Right lobe of liver (tissue), 6 donors: ENCODE measurements at regions of chr19 and their contacts with region 1.

Region 1: DNA sequence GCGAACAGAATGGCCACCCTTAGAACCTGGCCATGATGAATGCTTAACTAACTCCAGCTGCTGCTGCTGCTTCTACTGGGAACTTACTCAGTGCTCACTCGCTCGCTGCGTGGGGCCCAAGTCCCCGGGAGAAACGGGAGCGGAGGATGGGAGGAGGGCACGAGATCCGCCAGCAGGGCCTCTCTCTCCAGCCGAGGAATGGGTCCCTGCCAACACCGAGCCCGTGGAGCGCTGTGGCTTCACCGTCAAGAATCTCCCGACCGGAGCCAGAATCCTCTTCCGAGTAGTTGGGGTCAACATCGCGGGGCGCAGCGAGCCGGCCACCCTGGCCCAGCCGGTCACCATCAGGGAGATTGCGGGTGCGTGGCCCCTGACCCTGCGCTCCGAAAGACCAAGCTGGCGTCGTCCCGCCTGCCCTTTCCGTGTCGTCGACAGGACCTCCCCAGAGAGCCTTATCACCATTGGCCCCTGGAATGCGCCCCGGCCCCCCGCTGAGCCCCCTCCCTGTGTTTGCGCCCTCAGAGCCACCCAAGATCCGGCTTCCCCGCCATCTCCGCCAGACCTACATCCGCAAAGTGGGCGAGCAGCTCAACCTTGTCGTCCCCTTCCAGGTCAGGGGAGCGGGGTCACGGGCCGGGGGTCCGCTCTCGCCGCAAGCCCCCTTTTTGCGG is 17.8 kb upstream of the EMC10 start:
- DNase-seq: no peak
- ATAC-seq: no peak
- H3K4me3 ChIP-seq: no peak overlapping the region
- H3K27ac ChIP-seq: no peak overlapping the region
- H3K4me1 ChIP-seq: no peaks in the 10 kb centered on the region
- H3K27me3 ChIP-seq: no peaks in the 10 kb centered on the region
- CTCF ChIP-seq: no peak
- POLR2A ChIP-seq: no peak

Region 2: GRCh38 chr19:50376166-50377050 is 82.1 kb before region 1 on chr19 and contains the start of gene NR1H2:
- intact Hi-C with region 1: loop called in 1 of 2 experiments (anchors 10 kb)
- DNase-seq: peak; percentile 94 to 97 (median 95)
- ATAC-seq: peak; percentile 91 to 97 (median 94)
- H3K4me3 ChIP-seq: peak within 1 kb of the TSS; percentile 83 to 99 (median 97)
- H3K27ac ChIP-seq: peak within 1 kb of the TSS; percentile 95 to 99 (median 98)
- H3K4me1 ChIP-seq: no peaks in the 10 kb centered on the region
- H3K27me3 ChIP-seq: no peaks in the 10 kb centered on the region
- CTCF ChIP-seq: no peak
- POLR2A ChIP-seq: peak; percentile 75
- total RNA-seq, gene NR1H2: 23.6 to 57.9 (median 33.8) TPM

Region 3: DNA sequence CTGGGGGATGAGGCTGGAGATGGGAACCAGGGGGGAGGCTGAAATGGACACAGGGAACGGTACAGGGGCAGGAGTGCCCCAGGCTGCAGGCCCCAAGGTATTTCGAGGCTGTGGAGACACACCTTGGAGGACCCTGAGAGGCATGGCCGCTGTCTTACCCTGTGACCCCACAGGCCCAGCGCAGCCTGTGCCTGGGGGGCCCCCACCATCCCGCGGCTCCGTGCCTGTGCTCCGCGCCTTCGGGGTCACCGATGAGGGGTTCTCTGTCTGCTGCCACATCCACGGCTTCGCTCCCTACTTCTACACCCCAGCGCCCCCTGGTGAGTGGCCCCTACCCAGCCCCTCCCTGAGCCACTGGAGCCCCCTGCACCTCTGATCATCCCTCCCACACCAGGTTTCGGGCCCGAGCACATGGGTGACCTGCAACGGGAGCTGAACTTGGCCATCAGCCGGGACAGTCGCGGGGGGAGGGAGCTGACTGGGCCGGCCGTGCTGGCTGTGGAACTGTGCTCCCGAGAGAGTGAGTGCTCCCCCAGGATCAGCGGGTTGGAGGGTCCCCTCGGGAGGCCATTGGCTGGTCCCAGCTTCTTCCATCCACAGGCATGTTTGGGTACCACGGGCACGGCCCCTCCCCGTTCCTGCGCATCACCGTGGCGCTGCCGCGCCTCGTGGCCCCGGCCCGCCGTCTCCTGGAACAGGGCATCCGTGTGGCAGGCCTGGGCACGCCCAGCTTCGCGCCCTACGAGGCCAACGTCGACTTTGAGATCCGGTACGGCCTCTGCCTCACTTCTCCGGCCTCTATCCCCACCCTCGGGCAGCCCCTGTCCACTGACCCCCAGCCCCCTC is 56.7 kb before region 1 on chr19:
- intact Hi-C with region 1: no loop called
- DNase-seq: no peak
- ATAC-seq: no peak
- H3K4me3 ChIP-seq: no peak overlapping the region
- H3K27ac ChIP-seq: no peak overlapping the region
- H3K4me1 ChIP-seq: no peaks in the 10 kb centered on the region
- H3K27me3 ChIP-seq: no peaks in the 10 kb centered on the region
- CTCF ChIP-seq: no peak
- POLR2A ChIP-seq: no peak

Region 4: DNA sequence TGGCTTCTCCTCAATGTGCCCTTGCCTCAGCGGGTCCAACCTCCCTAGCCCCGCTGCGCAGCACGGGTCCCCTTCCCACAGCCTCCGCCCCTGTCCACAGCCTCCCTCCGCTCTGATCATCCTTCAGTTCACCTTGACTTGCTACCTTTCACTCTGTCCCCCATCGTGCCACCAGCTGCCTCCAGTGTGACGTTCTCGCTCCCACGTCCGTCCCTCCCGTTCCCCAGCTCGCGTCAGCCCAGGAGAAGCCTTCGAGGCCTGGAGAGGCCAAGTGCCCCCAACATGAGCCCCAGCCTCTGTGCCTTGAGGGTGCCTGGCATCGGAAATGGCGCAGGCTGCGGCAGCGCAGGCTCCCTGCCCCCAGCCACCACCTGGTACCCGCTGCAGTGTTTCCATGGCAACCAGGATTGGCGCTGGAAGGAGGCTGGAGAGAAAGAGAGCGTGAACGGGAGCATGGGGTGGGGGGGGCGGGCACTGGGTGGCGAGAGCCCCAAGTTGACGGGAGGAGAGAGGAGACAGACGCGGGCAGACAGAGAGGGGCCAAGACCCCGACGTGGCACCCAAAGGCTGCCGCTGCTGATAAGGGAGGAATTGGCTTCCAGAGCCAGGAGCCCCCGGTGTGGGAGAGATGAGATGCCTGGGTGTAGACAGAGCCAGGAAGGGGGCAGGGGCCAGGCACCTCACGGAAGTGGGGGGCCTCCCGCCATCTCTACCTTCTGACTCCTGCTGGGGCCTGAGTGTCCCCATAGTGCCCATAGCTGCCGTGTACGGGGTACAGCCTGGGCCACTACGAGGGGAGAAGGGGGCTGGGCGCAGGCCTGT is 56.0 kb after region 1 on chr19:
- intact Hi-C with region 1: no loop called
- DNase-seq: peak in 1 of 3 donors; percentile 50
- ATAC-seq: no peak
- H3K4me3 ChIP-seq: no peak overlapping the region
- H3K27ac ChIP-seq: no peak overlapping the region
- H3K4me1 ChIP-seq: peaks cover 0 to 17% (median 4%) of the 10 kb centered on the region in 4 donors
- H3K27me3 ChIP-seq: no peaks in the 10 kb centered on the region
- CTCF ChIP-seq: no peak
- POLR2A ChIP-seq: no peak

Region 5: GRCh38 chr19:50628146-50628545 is 169.6 kb after region 1 on chr19:
- intact Hi-C with region 1: no loop called
- DNase-seq: no peak
- ATAC-seq: no peak
- H3K4me3 ChIP-seq: no peak overlapping the region
- H3K27ac ChIP-seq: no peak overlapping the region
- H3K4me1 ChIP-seq: no peaks in the 10 kb centered on the region
- H3K27me3 ChIP-seq: no peaks in the 10 kb centered on the region
- CTCF ChIP-seq: no peak
- POLR2A ChIP-seq: no peak

Region 6: GRCh38 chr19:50728084-50728737 is 269.7 kb after region 1 on chr19:
- intact Hi-C with region 1: no loop called
- DNase-seq: peak; percentile 57 to 76 (median 68)
- ATAC-seq: peak in 2 of 4 donors; percentile 40 to 46
- H3K4me3 ChIP-seq: no peak overlapping the region
- H3K27ac ChIP-seq: no peak overlapping the region
- H3K4me1 ChIP-seq: peaks cover 0 to 4% (median 0%) of the 10 kb centered on the region in 4 donors
- H3K27me3 ChIP-seq: no peaks in the 10 kb centered on the region
- CTCF ChIP-seq: no peak
- POLR2A ChIP-seq: no peak